Activated B cell treated with CpG ODN at 0.5 μM for 24 hours (primary cell): ENCODE measurements at regions of chr4 and their contacts with region 1.

Region 1: DNA sequence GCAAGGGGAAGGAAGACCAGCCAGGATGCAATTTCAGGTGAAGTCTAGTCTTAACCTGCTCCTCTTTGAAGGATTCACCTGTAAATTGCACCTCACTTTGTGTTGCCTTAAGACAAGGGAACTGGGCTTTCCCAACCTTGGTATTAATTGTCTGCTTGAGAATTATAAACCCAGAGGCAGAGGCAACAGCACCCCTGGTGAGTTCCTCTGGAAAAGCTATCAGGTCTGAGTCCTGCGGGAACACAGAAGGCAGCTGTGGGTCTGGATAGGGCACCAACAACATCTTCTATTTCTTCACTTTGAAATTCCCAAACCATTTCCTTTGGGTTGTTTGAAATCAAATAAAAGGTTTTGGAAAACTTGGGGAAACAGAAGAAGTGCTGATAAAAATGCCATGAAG is 109.2 kb upstream of the NPY2R start:
- DNase-seq: no peak
- ATAC-seq: no peak
- H3K4me3 Mint-ChIP-seq: no peak overlapping the region
- H3K27ac Mint-ChIP-seq: no peak overlapping the region
- H3K4me1 Mint-ChIP-seq: no peaks in the 10 kb centered on the region
- H3K27me3 Mint-ChIP-seq: no peaks in the 10 kb centered on the region
- CTCF ChIP-seq: no peak

Region 2: GRCh38 chr4:155119006-155119405 is 19.8 kb after region 1 on chr4:
- CTCF ChIA-PET with region 1: no interaction called
- POLR2A ChIA-PET with region 1: no interaction called
- intact Hi-C with region 1: no loop called
- DNase-seq: no peak
- ATAC-seq: no peak
- H3K4me3 Mint-ChIP-seq: no peak overlapping the region
- H3K27ac Mint-ChIP-seq: no peak overlapping the region
- H3K4me1 Mint-ChIP-seq: no peaks in the 10 kb centered on the region
- H3K27me3 Mint-ChIP-seq: no peaks in the 10 kb centered on the region
- CTCF ChIP-seq: no peak

Region 3: DNA sequence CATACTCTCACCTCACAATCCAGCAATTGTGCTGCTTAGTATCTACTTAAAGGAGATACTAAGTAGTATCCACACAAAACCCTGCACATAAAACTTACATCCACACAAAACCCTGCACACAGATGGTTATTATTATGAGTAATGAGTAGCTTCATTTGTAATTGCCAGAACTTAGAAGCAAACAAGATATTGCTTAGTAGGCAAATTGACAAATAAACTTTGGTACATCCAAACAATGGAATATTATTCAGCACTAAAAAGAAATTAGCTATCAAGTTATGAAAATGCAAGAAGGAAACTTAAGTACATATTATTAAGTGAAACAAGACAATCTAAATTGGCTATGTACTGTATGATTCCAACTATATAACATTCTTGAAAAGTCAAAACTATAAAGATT is 189.8 kb after region 1 on chr4:
- CTCF ChIA-PET with region 1: no interaction called
- POLR2A ChIA-PET with region 1: no interaction called
- intact Hi-C with region 1: loop called (anchors 5 kb)
- DNase-seq: no peak
- ATAC-seq: no peak
- H3K4me3 Mint-ChIP-seq: no peak overlapping the region
- H3K27ac Mint-ChIP-seq: no peak overlapping the region
- H3K4me1 Mint-ChIP-seq: no peaks in the 10 kb centered on the region
- H3K27me3 Mint-ChIP-seq: no peaks in the 10 kb centered on the region
- CTCF ChIP-seq: no peak